ENCODE measurements at regions of chr3 and their contacts with region 1.

Region 1: DNA sequence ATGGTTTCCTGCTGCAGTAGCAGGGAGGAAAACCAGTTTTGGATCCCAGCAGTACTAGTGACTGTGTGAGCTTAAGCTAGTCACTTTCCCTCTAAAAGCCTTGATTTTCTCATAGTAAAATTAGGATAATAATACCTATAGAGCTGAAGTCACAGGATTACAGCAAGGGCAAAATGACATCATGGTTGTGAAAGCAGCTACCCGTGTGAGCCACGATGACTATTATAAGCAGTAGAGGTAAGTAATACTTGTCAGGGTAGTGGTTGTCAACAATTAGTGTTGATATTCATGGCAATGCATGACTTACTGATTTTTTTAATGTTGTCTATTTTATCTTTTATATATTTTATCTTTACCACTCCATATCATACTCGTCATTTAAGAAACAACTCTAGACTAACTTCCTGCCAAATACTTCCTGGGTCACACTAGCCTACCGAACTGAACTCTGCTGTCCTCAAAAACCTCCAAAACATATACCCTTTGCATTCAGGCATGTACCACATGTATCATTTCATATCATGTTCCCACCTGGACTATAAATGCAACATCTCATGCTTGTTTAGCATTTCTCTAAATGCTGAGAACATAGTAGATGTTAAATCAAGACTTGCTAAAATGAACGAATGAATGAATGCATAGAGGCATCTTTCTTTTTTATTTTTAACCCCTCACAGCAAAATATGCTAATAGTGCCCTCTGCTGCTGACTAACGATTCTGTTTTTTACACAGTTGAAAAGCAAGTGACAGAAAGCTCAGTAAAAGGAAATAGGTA is 172.6 kb downstream of the P3H2 start:
- DNase-seq: peak; percentile 86
- ATAC-seq: peak; percentile 50
- H3K4me3 ChIP-seq: no peak overlapping the region
- H3K27ac ChIP-seq: peak overlapping the region; percentile 34; the same call in 1 of the 2 replicates
- H3K4me1 ChIP-seq: peaks cover 37% of the 10 kb centered on the region
- H3K27me3 ChIP-seq: no peaks in the 10 kb centered on the region
- CTCF ChIP-seq: peak; percentile 93

Region 2: GRCh38 chr3:188978421-188979171 is 969.5 kb before region 1 on chr3:
- CTCF ChIA-PET with region 1: no interaction called
- POLR2A ChIA-PET with region 1: no interaction called
- intact Hi-C with region 1: loop called (anchors 10 kb)
- DNase-seq: peak; percentile 81
- ATAC-seq: peak; percentile 59
- H3K4me3 ChIP-seq: no peak overlapping the region
- H3K27ac ChIP-seq: no peak overlapping the region
- H3K4me1 ChIP-seq: peaks cover 42% of the 10 kb centered on the region
- H3K27me3 ChIP-seq: no peaks in the 10 kb centered on the region
- CTCF ChIP-seq: no peak

Region 3: GRCh38 chr3:189394599-189395121 is 553.5 kb before region 1 on chr3:
- CTCF ChIA-PET with region 1: no interaction called
- POLR2A ChIA-PET with region 1: no interaction called
- intact Hi-C with region 1: loop called (anchors 2 kb)
- DNase-seq: no peak
- ATAC-seq: no peak
- H3K4me3 ChIP-seq: no peak overlapping the region
- H3K27ac ChIP-seq: no peak overlapping the region
- H3K4me1 ChIP-seq: peaks cover 20% of the 10 kb centered on the region
- H3K27me3 ChIP-seq: no peaks in the 10 kb centered on the region
- CTCF ChIP-seq: no peak

Region 4: GRCh38 chr3:189621948-189622603 is 326.1 kb before region 1 on chr3:
- CTCF ChIA-PET with region 1: no interaction called
- POLR2A ChIA-PET with region 1: no interaction called
- intact Hi-C with region 1: loop called (anchors 5 kb)
- DNase-seq: peak; percentile 15
- ATAC-seq: peak; percentile 38; the same call in 1 of the 2 replicates
- H3K4me3 ChIP-seq: no peak overlapping the region
- H3K27ac ChIP-seq: no peak overlapping the region
- H3K4me1 ChIP-seq: peaks cover 25% of the 10 kb centered on the region
- H3K27me3 ChIP-seq: no peaks in the 10 kb centered on the region
- CTCF ChIP-seq: no peak

Region 5: DNA sequence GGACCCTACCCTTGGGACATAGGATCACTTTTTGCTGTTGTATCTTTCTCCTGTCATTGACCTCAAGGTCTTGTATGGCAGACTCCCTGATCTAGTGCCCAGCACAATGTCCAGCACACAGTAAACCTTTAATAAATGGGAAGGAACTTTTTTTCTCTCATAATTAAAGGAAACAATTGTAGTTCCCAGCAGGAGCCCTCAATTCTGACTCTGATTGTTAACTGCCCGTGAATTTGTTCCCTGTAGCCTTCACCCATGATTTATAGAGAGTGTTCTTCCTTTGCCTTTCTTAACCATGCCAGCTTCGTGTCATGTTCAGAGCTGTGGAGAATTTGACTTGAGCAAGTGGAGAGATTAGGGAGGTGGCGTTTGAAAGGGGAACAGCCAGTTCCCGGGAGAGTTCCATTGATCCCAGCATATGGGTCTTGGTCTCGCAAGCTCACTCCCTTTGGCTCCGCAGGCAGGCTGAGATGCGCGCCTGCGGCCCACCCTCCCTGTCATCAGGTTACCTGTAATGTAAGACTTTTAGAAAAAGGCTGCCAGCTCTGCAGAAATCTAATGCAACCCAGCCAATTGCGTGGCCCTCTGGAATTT is 134.4 kb before region 1 on chr3:
- CTCF ChIA-PET with region 1: no interaction called
- POLR2A ChIA-PET with region 1: no interaction called
- intact Hi-C with region 1: no loop called
- DNase-seq: no peak
- ATAC-seq: no peak
- H3K4me3 ChIP-seq: no peak overlapping the region
- H3K27ac ChIP-seq: no peak overlapping the region
- H3K4me1 ChIP-seq: no peaks in the 10 kb centered on the region; the same call in 1 of the 2 replicates
- H3K27me3 ChIP-seq: no peaks in the 10 kb centered on the region
- CTCF ChIP-seq: no peak

Region 6: DNA sequence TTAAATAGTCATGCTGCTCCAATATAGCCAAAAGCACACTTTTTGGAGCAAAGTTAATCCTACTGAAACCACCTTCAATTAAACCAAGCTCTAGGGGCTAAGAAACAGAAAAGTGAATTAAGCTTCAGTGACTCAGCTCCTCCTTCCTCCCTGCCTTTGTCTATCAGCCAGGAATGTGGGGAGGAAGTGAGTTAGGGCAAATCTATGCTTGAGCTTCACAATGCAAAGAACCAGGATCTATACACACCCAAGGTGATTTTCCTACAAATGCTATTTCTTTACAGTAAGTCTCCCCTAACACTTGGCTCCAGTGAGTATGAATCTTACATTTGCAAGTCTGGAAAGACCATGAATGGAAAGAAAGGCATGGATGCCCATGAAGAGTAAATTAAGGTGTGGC is 39.5 kb before region 1 on chr3:
- CTCF ChIA-PET with region 1: no interaction called
- POLR2A ChIA-PET with region 1: no interaction called
- intact Hi-C with region 1: loop called (anchors 5 kb)
- DNase-seq: peak; percentile 97
- ATAC-seq: peak; percentile 85
- H3K4me3 ChIP-seq: peak overlapping the region; percentile 13; the same call in 1 of the 2 replicates
- H3K27ac ChIP-seq: peak overlapping the region; percentile 90
- H3K4me1 ChIP-seq: peaks cover 42% of the 10 kb centered on the region
- H3K27me3 ChIP-seq: no peaks in the 10 kb centered on the region
- CTCF ChIP-seq: no peak

Measured in PC-3 (cell line).